Motor neuron (in vitro differentiated cells): ENCODE measurements at regions of chr19 and their contacts with region 1.

Region 1: DNA sequence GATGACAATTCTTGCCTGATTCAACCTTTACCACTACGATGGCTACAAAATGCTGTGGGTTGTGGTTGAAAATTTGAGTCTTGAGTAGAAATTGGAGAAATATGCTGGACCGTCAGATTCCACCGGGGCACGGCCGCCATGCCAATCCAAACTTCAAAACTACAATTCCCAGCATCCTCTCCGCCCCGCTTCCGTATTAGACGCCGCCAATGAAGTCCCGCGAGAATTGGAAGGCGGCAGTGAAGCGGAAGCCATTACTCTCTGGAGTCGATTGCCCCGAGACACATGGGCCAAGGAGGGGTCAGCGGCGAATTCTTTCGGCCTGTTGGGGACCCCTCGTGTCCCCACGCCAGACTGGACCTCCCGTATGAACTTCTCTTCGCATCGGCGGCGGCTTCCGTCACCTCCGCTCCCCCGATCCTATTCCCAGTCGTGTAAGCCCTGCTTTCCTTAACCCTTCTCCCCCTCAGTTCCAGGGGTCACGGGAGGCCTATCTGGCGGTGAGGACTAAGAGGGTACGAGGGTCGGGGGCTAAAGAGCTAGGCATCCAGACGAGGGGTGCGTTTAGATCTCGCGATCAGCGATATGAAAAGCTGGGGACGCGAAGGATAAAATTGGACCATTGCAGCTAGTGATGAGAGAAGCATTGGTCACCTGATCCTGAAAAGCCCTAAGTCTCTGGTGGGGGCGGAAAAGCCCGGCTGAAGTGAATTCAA is at the start of gene ZNF317:
- ATAC-seq: peak; percentile 94 to 99 (median 98)
- H3K4me3 ChIP-seq: peak within 1 kb of the TSS; percentile 78 to 96 (median 87)
- H3K27ac ChIP-seq: peak within 1 kb of the TSS; percentile 85 to 90
- H3K4me1 ChIP-seq: peaks cover 0 to 4% of the 10 kb centered on the region in 2 donors
- total RNA-seq, gene ZNF317: 20.5 to 36.9 (median 27.8) TPM

Region 2: DNA sequence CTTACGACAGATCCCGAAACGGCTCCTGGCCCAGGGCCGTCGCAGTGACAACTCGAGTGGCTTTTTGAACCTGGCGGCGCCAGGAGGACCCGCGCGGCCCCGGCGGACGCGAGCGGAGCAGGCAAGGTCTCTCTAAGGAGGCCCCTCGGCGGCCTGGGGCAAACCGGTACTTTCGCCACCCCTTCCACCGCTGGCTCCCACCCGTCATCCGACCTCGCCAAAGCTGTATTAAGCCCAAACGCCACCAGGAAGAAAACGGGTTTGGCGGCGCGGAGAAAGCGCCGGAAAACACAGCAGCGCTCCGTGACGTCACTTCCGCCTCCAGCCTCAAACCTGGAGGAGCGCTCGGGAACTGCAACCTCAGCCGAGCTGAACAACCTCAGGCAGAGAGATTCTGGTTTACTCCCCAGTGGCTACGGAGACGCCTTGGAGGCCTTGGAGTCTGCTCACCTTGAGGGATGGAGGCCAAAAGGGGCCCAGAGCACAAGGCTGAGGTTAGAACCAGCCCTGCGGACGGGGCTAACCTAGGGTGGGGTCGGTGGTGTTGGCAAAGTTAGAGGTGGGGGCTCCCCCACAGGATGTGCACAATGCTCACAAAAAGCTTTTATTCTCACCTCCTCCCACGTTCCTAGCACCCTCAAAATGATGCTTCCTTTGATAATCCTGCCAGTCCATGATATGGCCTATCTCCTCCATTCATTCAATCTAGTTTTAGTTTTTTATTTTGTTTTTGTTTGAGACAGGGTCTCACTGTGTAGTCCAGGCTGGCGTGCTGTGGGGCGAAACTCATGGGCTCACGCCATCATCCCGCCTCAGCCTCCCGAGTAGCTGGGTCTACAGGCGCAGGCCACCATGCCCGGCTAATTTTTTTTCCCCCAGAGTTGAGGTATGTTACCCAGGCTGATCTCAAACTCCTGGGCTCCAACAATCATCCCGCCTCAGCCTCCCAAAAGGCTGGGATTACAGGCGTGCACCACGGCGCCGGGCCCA is 295.3 kb after region 1 on chr19 and contains the start of gene ZNF266:
- in situ Hi-C with region 1: loop called in 1 of 9 experiments (anchors 25 kb)
- ATAC-seq: peak; percentile 96 to 99 (median 98)
- H3K4me3 ChIP-seq: peak within 1 kb of the TSS; percentile 60 to 96 (median 78)
- H3K27ac ChIP-seq: peak within 1 kb of the TSS; percentile 81 to 92
- H3K4me1 ChIP-seq: peaks cover 9 to 13% of the 10 kb centered on the region in 2 donors
- total RNA-seq, gene ZNF266: 12.7 to 42.4 (median 19.5) TPM

Region 3: GRCh38 chr19:9461938-9462337 is 321.6 kb after region 1 on chr19:
- in situ Hi-C with region 1: no loop called
- ATAC-seq: no peak
- H3K4me3 ChIP-seq: no peak overlapping the region
- H3K27ac ChIP-seq: no peak overlapping the region
- H3K4me1 ChIP-seq: no peaks in the 10 kb centered on the region

Region 4: DNA sequence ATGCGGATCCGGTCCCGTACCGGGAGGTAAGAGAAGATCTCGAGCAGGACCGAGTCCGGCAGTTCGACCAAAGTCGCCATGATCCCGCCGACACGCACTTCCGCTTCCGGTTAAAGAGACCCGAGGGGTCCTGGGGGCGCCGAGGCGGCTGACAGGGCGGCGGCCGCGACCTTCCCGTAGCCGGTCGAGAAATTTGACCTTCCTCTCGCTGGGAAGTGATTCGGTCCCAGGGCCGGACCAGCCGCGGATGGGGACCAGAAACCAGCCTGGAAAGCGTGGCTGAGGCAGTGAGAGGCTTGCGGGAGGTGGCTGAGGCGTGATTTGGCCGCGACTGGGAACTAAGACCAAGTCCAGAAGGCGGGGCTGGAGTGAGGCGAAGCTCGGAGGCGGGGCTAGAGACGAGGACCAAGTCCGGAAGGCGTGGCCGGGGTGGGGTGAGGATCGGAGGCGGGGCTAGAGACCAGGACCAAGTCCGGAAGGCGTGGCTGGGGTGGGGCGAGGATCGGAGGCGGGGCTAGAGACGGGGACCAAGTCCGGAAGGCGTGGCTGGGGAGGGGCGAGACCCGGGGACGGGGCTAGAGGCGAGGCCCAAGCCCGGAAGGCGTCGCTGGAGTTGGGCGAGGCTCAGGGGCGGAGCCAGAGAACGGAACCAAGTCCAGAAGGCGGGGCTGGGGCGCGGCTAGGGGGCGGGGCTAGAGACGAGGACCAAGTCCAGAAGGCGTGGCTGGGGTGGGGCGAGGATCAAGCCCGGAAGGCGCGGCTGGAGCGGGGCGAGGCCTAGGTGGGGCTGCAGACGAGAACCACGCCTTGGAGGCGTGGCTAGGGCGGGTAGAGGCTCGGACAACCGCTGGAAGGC is 678.6 kb after region 1 on chr19 and contains the start of gene FBXL12:
- in situ Hi-C with region 1: loop called in 1 of 9 experiments (anchors 25 kb)
- ATAC-seq: peak; percentile 79 to 89 (median 86)
- H3K4me3 ChIP-seq: peak within 1 kb of the TSS; percentile 77 to 91 (median 85)
- H3K27ac ChIP-seq: peak within 1 kb of the TSS; percentile 96
- H3K4me1 ChIP-seq: peaks cover 11% of the 10 kb centered on the region in 2 donors
- total RNA-seq, gene FBXL12: 20.3 to 32.9 (median 26.1) TPM